ENCODE measurements at regions of chrX and their contacts with region 1.

Region 1: GRCh38 chrX:41116948-41117347 is 31.7 kb downstream of the USP9X start:
- DNase-seq: peak; percentile 4
- ATAC-seq: 0 out of 2 replicates have a peak, but pooled peaks have one; percentile 33
- H3K4me3 ChIP-seq: no peak overlapping the region
- H3K27ac ChIP-seq: no peak overlapping the region
- H3K4me1 ChIP-seq: peaks cover 24% of the 10 kb centered on the region
- H3K27me3 ChIP-seq: no peaks in the 10 kb centered on the region
- CTCF ChIP-seq: no peak

Region 2: DNA sequence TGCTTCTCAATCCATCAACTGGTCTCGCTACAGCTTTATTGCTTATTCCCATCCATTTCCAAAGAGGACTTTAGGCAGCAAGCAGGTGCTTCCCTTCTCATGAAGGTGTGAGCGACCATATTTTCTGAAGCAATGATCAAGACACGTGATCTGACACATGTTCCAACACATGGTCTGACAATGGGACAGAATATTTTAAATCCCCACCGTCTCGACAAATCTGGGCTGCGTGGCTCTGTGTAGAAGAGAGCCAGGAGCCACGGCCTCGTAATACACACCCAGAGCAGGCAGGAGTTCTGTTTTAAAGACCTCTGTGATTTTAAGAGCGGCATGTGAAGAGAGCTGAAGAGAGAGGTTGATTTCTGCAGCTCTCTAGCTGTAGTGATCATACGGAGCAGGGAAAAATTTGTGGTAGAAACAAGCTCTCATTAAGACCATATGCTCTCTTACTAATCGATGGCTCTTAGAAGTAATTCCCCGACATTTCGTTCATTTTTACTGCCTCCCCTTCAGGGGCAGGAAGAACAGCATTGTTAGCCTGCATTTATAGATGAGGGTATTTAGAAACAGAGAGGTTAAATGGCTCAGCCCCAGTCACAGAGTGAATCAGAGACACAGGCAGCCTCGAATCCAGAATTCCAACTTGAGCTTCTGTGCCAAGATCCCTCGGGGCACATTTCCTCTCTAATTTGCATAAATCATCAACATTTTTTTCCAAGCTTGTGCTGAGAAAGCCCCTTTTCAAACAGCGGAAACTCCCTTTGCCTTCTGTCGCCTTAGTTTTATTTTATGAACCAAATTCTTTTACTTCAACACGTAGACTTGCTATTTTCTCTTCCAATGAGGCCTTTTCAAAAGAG is 928.1 kb before region 1 on chrX:
- CTCF ChIA-PET with region 1: no interaction called
- POLR2A ChIA-PET with region 1: no interaction called
- intact Hi-C with region 1: no loop called
- DNase-seq: no peak
- ATAC-seq: no peak
- H3K4me3 ChIP-seq: no peak overlapping the region
- H3K27ac ChIP-seq: no peak overlapping the region
- H3K4me1 ChIP-seq: no peaks in the 10 kb centered on the region
- H3K27me3 ChIP-seq: no peaks in the 10 kb centered on the region; the same call in 1 of the 2 replicates
- CTCF ChIP-seq: no peak

Region 3: GRCh38 chrX:40845331-40845911 is 271.5 kb before region 1 on chrX:
- CTCF ChIA-PET with region 1: interaction called, 11 read pairs
- POLR2A ChIA-PET with region 1: no interaction called
- intact Hi-C with region 1: no loop called
- DNase-seq: peak; percentile 14
- ATAC-seq: no peak
- H3K4me3 ChIP-seq: no peak overlapping the region
- H3K27ac ChIP-seq: no peak overlapping the region
- H3K4me1 ChIP-seq: no peaks in the 10 kb centered on the region
- H3K27me3 ChIP-seq: no peaks in the 10 kb centered on the region
- CTCF ChIP-seq: no peak

Region 4: GRCh38 chrX:40922307-40922706 is 194.6 kb before region 1 on chrX:
- CTCF ChIA-PET with region 1: no interaction called
- POLR2A ChIA-PET with region 1: no interaction called
- intact Hi-C with region 1: loop called (anchors 10 kb)
- DNase-seq: peak; percentile 81
- ATAC-seq: peak; percentile 55
- H3K4me3 ChIP-seq: peak overlapping the region; percentile 35; the same call in 1 of the 2 replicates
- H3K27ac ChIP-seq: no peak overlapping the region
- H3K4me1 ChIP-seq: peaks cover 15% of the 10 kb centered on the region
- H3K27me3 ChIP-seq: no peaks in the 10 kb centered on the region
- CTCF ChIP-seq: peak; percentile 68

Region 5: DNA sequence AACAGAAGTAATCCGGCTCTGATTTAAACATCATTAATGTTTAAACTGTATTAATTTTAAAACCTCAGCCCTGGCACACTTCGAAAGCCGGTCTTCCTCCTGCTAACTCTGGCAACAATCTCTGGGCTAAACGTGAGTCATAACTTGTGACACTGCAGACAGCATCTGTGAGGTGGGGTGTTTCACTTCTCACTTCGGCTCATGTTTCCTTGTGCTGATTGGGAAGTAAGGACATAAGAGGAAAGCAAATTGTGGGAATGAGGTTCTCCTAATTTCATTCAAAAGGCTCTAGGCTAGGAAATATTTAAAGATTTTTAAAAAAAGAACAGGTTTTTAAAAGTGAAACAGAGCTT is 171.6 kb before region 1 on chrX:
- CTCF ChIA-PET with region 1: no interaction called
- POLR2A ChIA-PET with region 1: no interaction called
- intact Hi-C with region 1: no loop called
- DNase-seq: peak; percentile 75
- ATAC-seq: peak; percentile 96
- H3K4me3 ChIP-seq: no peak overlapping the region
- H3K27ac ChIP-seq: no peak overlapping the region
- H3K4me1 ChIP-seq: peaks cover 11% of the 10 kb centered on the region
- H3K27me3 ChIP-seq: no peaks in the 10 kb centered on the region
- CTCF ChIP-seq: no peak

Region 6: GRCh38 chrX:41198406-41198805 is 81.5 kb after region 1 on chrX:
- CTCF ChIA-PET with region 1: no interaction called
- POLR2A ChIA-PET with region 1: no interaction called
- intact Hi-C with region 1: no loop called
- DNase-seq: peak; percentile 91
- ATAC-seq: peak; percentile 93
- H3K4me3 ChIP-seq: no peak overlapping the region
- H3K27ac ChIP-seq: peak overlapping the region; percentile 32; the same call in 1 of the 2 replicates
- H3K4me1 ChIP-seq: peaks cover 13% of the 10 kb centered on the region
- H3K27me3 ChIP-seq: no peaks in the 10 kb centered on the region
- CTCF ChIP-seq: no peak